ENCODE measurements at regions of chr5 and their contacts with region 1.

Region 1: GRCh38 chr5:115487756-115488155 is 56.8 kb downstream of the FEM1C start:
- DNase-seq: no peak
- H3K4me3 Mint-ChIP-seq: no peak overlapping the region
- H3K27ac Mint-ChIP-seq: peak overlapping the region; percentile 70
- H3K4me1 Mint-ChIP-seq: peaks cover 16% of the 10 kb centered on the region
- H3K27me3 Mint-ChIP-seq: peaks cover 5% of the 10 kb centered on the region

Region 2: GRCh38 chr5:115415143-115415491 is 72.6 kb before region 1 on chr5:
- intact Hi-C with region 1: loop called (anchors 2 kb)
- DNase-seq: no peak
- H3K4me3 Mint-ChIP-seq: no peak overlapping the region
- H3K27ac Mint-ChIP-seq: no peak overlapping the region
- H3K4me1 Mint-ChIP-seq: peaks cover 3% of the 10 kb centered on the region
- H3K27me3 Mint-ChIP-seq: peaks cover 8% of the 10 kb centered on the region

Region 3: GRCh38 chr5:115450741-115451140 is 37.0 kb before region 1 on chr5:
- intact Hi-C with region 1: loop called (anchors 5 kb)
- DNase-seq: no peak
- H3K4me3 Mint-ChIP-seq: no peak overlapping the region
- H3K27ac Mint-ChIP-seq: no peak overlapping the region
- H3K4me1 Mint-ChIP-seq: no peaks in the 10 kb centered on the region
- H3K27me3 Mint-ChIP-seq: peaks cover 4% of the 10 kb centered on the region

Measured in activated T-helper 2 cell treated with anti-CD3 and anti-CD28 coated beads, Interferon-gamma antibody, Interleukin-2, Interleukin-4, amounts not matched to agents 10 μg/mL and 5 μg/mL and 100 μg/mL, durations not matched to agents 14 hours and 24 hours and 36 hours (primary cell).